Activated CD8-positive, alpha-beta T cell treated with anti-CD3 and anti-CD28 coated beads, Interleukin-2, amount 10 ng/mL, durations not matched to agents 7 days and 5 days (primary cell): ENCODE measurements at regions of chr7 and their contacts with region 1.

Region 1: DNA sequence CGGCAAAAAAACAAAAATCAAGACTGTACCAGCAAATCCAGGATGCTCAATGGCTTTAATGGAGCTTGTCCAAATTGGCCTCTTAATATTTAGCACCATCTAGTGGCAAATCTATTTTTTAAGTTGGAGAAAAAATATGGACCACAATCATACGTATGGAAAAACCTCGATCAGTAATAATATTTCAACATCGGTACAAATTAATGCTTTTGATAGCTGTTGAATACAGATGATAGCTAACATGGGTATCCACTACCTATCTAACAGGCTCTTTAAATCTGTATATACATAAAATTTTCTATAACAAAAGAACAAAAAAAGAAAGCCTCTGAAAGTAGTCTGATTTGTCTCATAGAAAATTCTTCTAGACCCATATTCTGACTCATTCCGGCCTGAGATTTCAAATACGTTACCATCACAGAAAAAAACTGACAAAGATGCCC is 29.2 kb downstream of the COA1 start:
- DNase-seq: no peak
- ATAC-seq: peak; percentile 63
- H3K4me3 Mint-ChIP-seq: no peak overlapping the region
- H3K27ac Mint-ChIP-seq: no peak overlapping the region
- H3K4me1 Mint-ChIP-seq: peaks cover 71% of the 10 kb centered on the region
- H3K27me3 Mint-ChIP-seq: no peaks in the 10 kb centered on the region

Region 2: GRCh38 chr7:43385856-43386255 is 314.2 kb before region 1 on chr7:
- CTCF ChIA-PET with region 1: no interaction called
- POLR2A ChIA-PET with region 1: no interaction called
- DNase-seq: no peak
- ATAC-seq: no peak
- H3K4me3 Mint-ChIP-seq: no peak overlapping the region
- H3K27ac Mint-ChIP-seq: no peak overlapping the region
- H3K4me1 Mint-ChIP-seq: peaks cover 1% of the 10 kb centered on the region
- H3K27me3 Mint-ChIP-seq: peaks cover 2% of the 10 kb centered on the region

Region 3: GRCh38 chr7:43439631-43440401 is 260.3 kb before region 1 on chr7:
- CTCF ChIA-PET with region 1: interaction called, 14 read pairs
- POLR2A ChIA-PET with region 1: no interaction called
- DNase-seq: peak; percentile 68
- ATAC-seq: peak; percentile 81
- H3K4me3 Mint-ChIP-seq: no peak overlapping the region
- H3K27ac Mint-ChIP-seq: no peak overlapping the region
- H3K4me1 Mint-ChIP-seq: no peaks in the 10 kb centered on the region
- H3K27me3 Mint-ChIP-seq: peaks cover 9% of the 10 kb centered on the region

Region 4: DNA sequence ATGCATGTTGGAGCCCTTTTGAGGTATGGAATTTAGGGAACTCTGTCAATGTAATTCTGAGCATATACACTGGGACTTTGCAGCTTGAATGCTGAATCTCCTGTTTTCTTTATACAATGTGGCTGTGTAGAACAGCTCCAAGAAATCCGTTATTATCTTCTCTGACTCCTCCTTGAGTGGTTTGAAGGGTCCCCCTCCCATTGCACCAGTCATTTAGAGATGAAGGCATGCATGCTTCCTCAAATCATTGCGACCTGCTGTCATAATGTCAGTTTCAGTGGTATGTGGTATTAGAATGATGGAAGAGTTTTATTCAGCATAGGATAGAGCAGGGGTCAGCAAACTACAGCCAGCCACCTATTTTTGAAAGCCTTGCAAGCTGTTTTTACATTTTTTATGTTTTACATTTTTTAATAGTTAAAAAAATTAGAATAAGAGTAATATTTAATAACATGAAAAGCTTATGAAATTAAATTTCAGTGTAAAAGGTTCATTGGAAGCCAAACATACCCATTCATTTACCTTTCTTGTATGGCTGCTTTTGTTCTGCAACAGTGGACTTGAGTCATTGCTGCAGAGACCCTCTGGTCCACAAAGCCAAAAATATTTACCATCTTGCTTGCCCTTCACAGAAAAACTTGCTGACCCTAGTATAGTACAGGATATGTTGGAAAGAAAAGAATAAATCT is 109.1 kb before region 1 on chr7:
- CTCF ChIA-PET with region 1: interaction called, 508 read pairs
- POLR2A ChIA-PET with region 1: interaction called, 4 read pairs
- DNase-seq: peak; percentile 56
- ATAC-seq: peak; percentile 29
- H3K4me3 Mint-ChIP-seq: peak overlapping the region; percentile 28
- H3K27ac Mint-ChIP-seq: peak overlapping the region; percentile 27
- H3K4me1 Mint-ChIP-seq: peaks cover 79% of the 10 kb centered on the region
- H3K27me3 Mint-ChIP-seq: no peaks in the 10 kb centered on the region

Region 5: GRCh38 chr7:43625453-43625852 is 74.6 kb before region 1 on chr7:
- CTCF ChIA-PET with region 1: interaction called, 55 read pairs
- POLR2A ChIA-PET with region 1: no interaction called
- DNase-seq: peak; percentile 75
- ATAC-seq: peak; percentile 81
- H3K4me3 Mint-ChIP-seq: peak overlapping the region; percentile 22
- H3K27ac Mint-ChIP-seq: peak overlapping the region; percentile 73
- H3K4me1 Mint-ChIP-seq: peaks cover 84% of the 10 kb centered on the region
- H3K27me3 Mint-ChIP-seq: no peaks in the 10 kb centered on the region

Region 6: GRCh38 chr7:43647673-43648472 is 52.2 kb before region 1 on chr7:
- CTCF ChIA-PET with region 1: interaction called, 113 read pairs
- POLR2A ChIA-PET with region 1: interaction called, 27 read pairs
- DNase-seq: peak; percentile 48
- ATAC-seq: peak; percentile 14
- H3K4me3 Mint-ChIP-seq: peak overlapping the region; percentile 71
- H3K27ac Mint-ChIP-seq: peak overlapping the region; percentile 89
- H3K4me1 Mint-ChIP-seq: peaks cover 95% of the 10 kb centered on the region
- H3K27me3 Mint-ChIP-seq: no peaks in the 10 kb centered on the region

Region 7: GRCh38 chr7:43711503-43711902 is 11.4 kb after region 1 on chr7:
- CTCF ChIA-PET with region 1: interaction called, 10 read pairs
- POLR2A ChIA-PET with region 1: no interaction called
- DNase-seq: no peak
- ATAC-seq: no peak
- H3K4me3 Mint-ChIP-seq: no peak overlapping the region
- H3K27ac Mint-ChIP-seq: no peak overlapping the region
- H3K4me1 Mint-ChIP-seq: peaks cover 9% of the 10 kb centered on the region
- H3K27me3 Mint-ChIP-seq: no peaks in the 10 kb centered on the region

Region 8: DNA sequence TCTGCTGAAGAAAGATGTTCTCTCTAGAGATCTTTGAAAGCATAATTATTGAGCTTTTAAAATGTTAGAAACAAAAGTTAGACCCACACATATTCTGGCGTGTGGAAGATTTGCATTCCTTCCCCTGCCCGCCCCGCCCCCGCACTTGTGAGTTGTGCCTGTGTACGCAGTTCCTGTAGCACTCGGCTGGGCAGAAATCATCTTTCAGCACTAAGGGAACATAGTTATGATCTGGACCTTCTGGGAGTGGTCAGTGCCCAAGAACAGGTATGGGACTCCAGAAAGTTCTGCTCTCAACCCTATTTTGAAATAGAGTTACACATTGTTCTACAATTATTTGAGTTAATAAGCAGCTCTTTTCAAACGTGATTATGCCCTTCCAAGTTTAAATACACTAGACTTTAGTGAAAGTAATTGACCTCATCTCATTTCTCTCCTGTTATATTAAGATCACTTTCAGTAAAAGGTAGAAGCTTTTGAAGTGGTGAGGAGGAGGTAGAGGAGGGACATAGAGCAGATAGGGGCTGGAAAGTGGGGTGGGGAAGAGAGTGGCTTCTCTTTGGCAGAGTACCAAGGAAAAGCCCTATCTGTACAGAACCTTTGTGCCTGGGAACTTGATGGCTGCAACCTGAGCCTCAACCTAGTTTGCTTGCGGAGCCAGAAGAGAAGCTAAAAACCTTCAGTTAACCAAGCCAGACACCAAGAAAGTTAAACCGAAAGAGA is 64.1 kb after region 1 on chr7:
- CTCF ChIA-PET with region 1: no interaction called
- POLR2A ChIA-PET with region 1: no interaction called
- DNase-seq: no peak
- ATAC-seq: peak; percentile 52
- H3K4me3 Mint-ChIP-seq: no peak overlapping the region
- H3K27ac Mint-ChIP-seq: no peak overlapping the region
- H3K4me1 Mint-ChIP-seq: peaks cover 27% of the 10 kb centered on the region
- H3K27me3 Mint-ChIP-seq: no peaks in the 10 kb centered on the region

Region 9: DNA sequence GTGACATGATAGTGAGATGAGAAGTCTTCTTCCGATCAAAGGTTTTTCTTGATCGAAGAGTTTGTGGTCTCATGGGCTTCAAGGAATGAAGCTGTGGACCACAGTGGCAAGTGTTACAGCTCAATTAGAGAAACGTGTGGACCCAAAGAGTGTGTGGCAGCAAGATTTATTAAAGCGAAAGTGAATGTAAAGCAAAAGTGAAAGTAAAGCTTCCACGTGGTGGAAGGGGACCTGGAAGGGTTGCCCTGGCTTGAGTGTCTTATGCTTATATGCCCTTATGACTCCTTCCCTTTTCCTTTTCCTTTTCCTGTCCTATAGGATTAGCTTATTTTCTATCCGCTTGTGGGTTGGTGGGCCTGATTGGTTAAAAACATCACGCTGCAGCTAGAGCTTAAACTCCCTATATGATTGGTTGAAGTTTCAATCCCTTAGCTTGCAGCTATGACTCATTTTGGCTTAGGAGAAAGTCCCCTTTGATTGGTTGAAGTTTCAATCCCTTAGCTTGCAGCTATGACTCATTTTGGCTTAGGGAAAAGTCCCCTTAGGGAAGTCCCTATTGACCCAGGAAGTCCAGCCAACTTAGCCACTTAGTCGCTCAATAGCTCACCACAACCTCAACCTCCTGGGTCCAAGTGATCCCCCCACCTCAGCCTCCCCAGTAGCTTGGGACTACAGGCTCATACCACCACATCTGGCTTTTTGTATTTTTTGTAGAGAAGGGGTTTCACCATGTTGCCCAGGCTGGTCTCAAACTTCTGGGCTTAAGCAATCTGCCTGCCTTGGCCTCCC is 134.6 kb after region 1 on chr7:
- CTCF ChIA-PET with region 1: interaction called, 55 read pairs
- POLR2A ChIA-PET with region 1: no interaction called
- DNase-seq: peak; percentile 51
- ATAC-seq: peak; percentile 75
- H3K4me3 Mint-ChIP-seq: peak overlapping the region; percentile 82
- H3K27ac Mint-ChIP-seq: peak overlapping the region; percentile 91
- H3K4me1 Mint-ChIP-seq: peaks cover 22% of the 10 kb centered on the region
- H3K27me3 Mint-ChIP-seq: peaks cover 4% of the 10 kb centered on the region